Ovary (tissue), 10 donors: ENCODE measurements at regions of chr15 and their contacts with region 1.

Region 1: GRCh38 chr15:31326156-31326732 is 391 bp upstream of the KLF13 start:
- DNase-seq: peak; percentile 93 to 100 (median 99)
- H3K4me3 ChIP-seq: peak overlapping the region; percentile 50
- H3K27ac ChIP-seq: peak overlapping the region; percentile 96 to 97
- H3K4me1 ChIP-seq: peaks cover 6% of the 10 kb centered on the region
- H3K27me3 ChIP-seq: no peaks in the 10 kb centered on the region
- CTCF ChIP-seq: peak in 2 of 3 donors; percentile 20 to 39
- EP300 ChIP-seq: peak; percentile 56
- POLR2A ChIP-seq: peak; percentile 94

Region 2: GRCh38 chr15:31391687-31392671 is 65.7 kb after region 1 on chr15:
- intact Hi-C with region 1: loop called in 1 of 4 experiments (anchors 2 kb)
- DNase-seq: peak; percentile 64 to 91 (median 80)
- H3K4me3 ChIP-seq: peak overlapping the region; percentile 55
- H3K27ac ChIP-seq: peak overlapping the region; percentile 62 to 78
- H3K4me1 ChIP-seq: peaks cover 4% of the 10 kb centered on the region
- H3K27me3 ChIP-seq: no peaks in the 10 kb centered on the region
- CTCF ChIP-seq: no peak
- EP300 ChIP-seq: peak; percentile 26
- POLR2A ChIP-seq: peak; percentile 86

Region 3: GRCh38 chr15:31435261-31435911 is 109.1 kb after region 1 on chr15:
- intact Hi-C with region 1: loop called in 1 of 4 experiments (anchors 10 kb)
- DNase-seq: peak; percentile 57 to 88 (median 73)
- H3K4me3 ChIP-seq: no peak overlapping the region
- H3K27ac ChIP-seq: peak overlapping the region in 1 of 2 donors; percentile 36
- H3K4me1 ChIP-seq: peaks cover 2% of the 10 kb centered on the region
- H3K27me3 ChIP-seq: no peaks in the 10 kb centered on the region
- CTCF ChIP-seq: peak in 2 of 3 donors; percentile 58 to 65
- EP300 ChIP-seq: no peak
- POLR2A ChIP-seq: no peak